ENCODE measurements at regions of chr7 and their contacts with region 1.

Region 1: GRCh38 chr7:28433699-28434219 is 21.4 kb downstream of the CREB5 start:
- DNase-seq: peak; percentile 41

Region 2: DNA sequence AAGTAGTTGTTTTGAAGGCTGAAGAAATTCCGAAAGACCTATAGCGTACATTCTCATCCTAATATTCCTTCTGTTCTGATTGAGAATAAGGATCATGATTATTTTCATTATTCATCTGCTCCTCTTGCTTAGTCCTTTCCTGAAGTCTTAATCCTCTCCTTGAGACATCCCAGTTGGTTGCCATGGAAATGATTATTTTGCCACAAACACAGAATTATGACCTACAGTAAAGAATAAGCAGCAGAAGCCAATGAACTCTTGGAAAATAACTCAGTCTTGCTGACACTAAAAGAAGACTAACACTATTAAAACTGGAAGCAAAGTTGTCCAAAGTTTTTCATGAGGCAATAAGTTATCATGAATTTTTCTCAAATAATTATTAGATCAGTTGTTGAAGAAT is 205.4 kb before region 1 on chr7:
- CTCF ChIA-PET with region 1: no interaction called
- POLR2A ChIA-PET with region 1: no interaction called
- DNase-seq: no peak

Region 3: GRCh38 chr7:28410628-28411531 is 22.9 kb before region 1 on chr7:
- CTCF ChIA-PET with region 1: interaction called, 3 read pairs
- POLR2A ChIA-PET with region 1: interaction called, 14 read pairs
- DNase-seq: peak; percentile 74

Region 4: DNA sequence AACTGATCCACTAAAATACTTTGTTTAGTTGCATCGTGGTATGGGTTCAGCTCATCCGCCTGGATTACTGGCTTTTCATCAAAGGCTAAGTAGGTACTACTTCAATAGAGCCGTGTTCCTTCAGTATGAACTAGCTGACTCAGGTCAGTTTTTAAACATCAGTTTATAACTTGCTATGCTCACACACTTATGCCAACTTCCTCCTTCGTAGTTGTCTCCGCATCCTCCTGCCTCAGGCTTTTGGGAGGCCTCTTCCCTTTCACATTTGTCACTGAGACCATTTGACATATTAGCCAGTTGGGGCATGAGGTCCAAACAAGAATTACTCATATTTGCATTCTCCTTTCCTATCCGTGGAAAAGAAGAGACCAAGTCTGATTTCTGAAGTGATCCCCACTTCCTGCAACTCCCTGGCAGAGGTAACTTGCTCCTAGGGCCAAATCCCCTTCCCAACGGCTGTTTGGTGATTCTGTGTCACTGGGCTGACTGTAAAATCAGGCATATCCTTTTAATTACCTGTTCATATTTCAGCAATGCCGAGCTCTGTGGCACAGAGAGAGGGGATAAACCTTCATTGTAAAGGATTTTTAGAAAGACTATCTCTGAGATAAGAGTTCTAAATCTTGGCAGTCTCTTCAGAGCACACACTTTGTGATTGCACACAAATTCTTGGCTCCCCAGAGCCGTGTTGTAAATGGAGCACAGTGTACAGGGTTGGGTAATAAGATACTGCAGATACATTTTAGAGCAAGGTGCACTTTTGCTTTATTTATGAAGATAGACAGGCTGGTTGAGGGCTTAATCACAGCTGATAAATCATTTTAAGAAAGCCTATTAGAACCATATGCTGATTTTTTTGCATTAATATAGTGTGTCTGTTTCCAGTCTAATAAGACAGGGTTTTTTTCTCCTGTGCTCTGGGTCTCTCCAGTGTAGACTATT is 86.6 kb after region 1 on chr7:
- CTCF ChIA-PET with region 1: no interaction called
- POLR2A ChIA-PET with region 1: no interaction called
- DNase-seq: no peak

Region 5: GRCh38 chr7:28626624-28627262 is 193.0 kb after region 1 on chr7:
- CTCF ChIA-PET with region 1: interaction called, 12 read pairs
- POLR2A ChIA-PET with region 1: no interaction called
- DNase-seq: peak; percentile 61

Measured in HEK293T (cell line).